Sigmoid colon (tissue), 7 donors: ENCODE measurements at regions of chr15 and their contacts with region 1.

Region 1: DNA sequence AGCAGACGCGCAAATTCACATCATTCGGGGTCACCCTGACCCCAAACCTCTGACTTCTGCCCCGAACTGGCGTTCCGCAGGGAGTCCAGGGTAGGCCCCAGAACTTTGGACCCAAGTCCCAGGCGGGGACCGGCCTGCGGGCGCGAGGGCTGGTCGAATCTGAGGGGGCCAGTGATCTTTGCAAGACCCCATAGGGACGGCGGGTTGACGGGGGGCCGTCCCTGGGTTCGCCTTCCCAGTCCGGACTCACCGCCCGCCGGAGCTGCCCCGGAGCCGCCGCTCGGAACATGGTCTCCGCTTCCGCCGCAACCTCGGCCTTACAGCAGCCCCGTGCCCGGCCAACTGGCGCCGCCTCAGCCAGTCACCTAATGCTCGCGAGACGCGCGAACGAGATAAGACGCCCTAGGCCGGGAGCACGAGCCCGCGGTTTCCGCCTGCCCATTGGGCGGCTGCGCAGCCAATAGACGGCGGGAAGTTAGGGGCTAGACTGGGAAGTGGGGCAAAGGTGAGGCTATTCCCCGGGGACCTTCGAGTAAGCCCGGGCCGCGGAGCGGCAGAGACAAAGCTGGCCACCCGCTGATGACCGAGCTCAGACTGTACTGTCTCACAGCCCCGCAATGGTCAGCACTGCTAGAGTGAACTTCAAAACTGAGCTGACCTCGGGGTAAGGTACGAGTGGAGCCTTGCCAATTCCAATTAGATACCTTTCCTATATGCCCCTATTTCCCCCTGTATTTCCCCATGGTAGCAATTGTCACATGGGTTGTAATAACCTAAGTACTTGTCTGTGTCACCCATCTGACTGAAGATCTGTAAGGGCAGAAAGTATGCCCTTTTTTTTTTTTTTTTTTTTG is at the start of gene ETFA:
- DNase-seq: peak; percentile 99
- H3K4me3 ChIP-seq: peak within 1 kb of the TSS; percentile 62 to 81 (median 68)
- H3K27ac ChIP-seq: peak within 1 kb of the TSS; percentile 84 to 88 (median 86)
- H3K4me1 ChIP-seq: peaks cover 0 to 27% (median 18%) of the 10 kb centered on the region in 4 donors
- H3K27me3 ChIP-seq: no peaks in the 10 kb centered on the region
- CTCF ChIP-seq: no peak
- EP300 ChIP-seq: peak in 1 of 4 donors; percentile 34
- POLR2A ChIP-seq: peak; percentile 90 to 91
- total RNA-seq, gene ETFA: 58.4 to 102 (median 82.0) TPM

Region 2: GRCh38 chr15:76196269-76197231 is 114.8 kb before region 1 on chr15:
- intact Hi-C with region 1: loop called (anchors 2 kb)
- DNase-seq: peak; percentile 95
- H3K4me3 ChIP-seq: no peak overlapping the region
- H3K27ac ChIP-seq: peak overlapping the region; percentile 50 to 75 (median 64)
- H3K4me1 ChIP-seq: peaks cover 0 to 44% (median 39%) of the 10 kb centered on the region in 4 donors
- H3K27me3 ChIP-seq: peaks cover 0 to 14% (median 13%) of the 10 kb centered on the region in 3 donors
- CTCF ChIP-seq: peak in 2 of 4 experiments; percentile 7 to 9
- EP300 ChIP-seq: peak in 2 of 4 donors; percentile 61 to 62
- POLR2A ChIP-seq: no peak

Region 3: DNA sequence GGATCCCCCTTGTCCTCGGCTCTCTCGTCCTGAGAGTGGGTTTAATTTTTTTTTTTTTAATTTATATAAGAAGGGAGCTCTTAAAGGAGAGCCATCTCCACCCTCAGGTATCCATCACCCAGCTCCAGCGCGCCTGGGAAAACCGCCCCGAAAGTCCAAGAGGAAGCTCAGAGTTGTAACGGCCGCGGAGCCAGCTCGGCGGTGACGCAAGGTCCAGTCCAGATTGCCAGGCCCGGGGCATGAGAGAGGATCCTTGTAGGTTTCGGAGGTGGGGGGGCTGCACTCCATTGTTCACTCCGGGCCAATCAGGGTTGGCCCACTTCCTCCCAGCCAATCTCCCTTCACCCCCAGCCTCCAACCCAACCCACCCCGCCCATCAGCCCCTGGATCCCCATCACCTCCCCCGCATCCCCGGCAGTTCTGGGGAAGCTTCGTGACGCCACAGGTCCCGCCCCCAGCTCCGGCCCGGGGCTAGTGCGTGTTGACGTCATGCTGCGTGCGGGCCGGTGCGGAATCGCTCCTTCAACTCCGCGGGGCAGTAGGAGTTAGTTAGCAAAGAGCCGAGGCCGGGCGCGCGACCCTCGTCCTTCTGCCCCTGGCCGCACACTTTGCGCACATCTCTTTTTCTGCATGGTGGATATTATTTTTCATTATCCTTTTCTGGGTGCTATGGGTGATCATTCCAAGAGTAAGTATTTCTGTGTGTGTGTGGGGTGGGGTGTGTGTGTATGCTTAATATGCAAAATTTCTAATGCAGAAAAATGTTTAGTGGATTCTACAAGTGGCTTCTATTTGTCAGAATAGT is 25.1 kb after region 1 on chr15 and contains the start of gene ISL2:
- intact Hi-C with region 1: loop called (anchors 1 kb)
- DNase-seq: peak; percentile 97
- H3K4me3 ChIP-seq: peak within 1 kb of the TSS; percentile 18 to 50 (median 42)
- H3K27ac ChIP-seq: peak within 1 kb of the TSS; percentile 50 to 75 (median 59)
- H3K4me1 ChIP-seq: peaks cover 0 to 54% (median 41%) of the 10 kb centered on the region in 4 donors
- H3K27me3 ChIP-seq: peaks cover 51 to 84% (median 76%) of the 10 kb centered on the region in 3 donors
- CTCF ChIP-seq: no peak
- EP300 ChIP-seq: no peak
- POLR2A ChIP-seq: peak in 1 of 2 donors; percentile 38
- total RNA-seq, gene ISL2: 2.2 to 6.4 (median 2.8) TPM

Region 4: DNA sequence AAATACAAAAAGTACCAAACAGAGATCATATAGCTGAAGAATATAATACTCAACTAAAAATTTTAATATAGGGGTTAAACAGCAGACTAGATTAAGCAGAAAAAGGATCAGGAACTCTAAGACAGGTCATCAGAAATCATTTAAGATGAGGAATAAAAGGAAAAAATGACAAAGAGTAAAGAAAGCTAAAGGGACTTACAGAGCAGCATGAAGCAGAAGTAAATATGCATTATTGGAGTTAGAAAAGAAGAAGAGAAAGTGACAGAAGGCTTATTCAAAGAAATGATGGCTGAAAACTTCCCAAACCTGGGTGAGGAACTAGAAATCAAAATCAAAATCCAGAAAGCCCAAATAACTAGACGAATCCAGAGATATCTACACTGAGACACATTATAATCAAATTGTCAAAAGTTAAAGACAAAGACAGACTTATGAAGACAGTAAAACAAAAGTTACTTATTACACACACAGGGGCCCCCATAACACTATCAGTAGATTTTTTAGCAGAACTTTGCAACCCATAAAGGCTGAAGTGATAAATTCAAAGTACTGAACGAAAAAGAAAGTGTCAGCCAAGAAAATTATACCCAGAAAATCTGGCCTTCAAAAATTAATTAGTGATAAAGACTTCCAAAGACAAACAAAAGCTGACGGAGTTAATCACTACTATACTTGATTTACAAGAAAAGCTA is 498.2 kb after region 1 on chr15:
- intact Hi-C with region 1: no loop called
- DNase-seq: no peak
- H3K4me3 ChIP-seq: no peak overlapping the region
- H3K27ac ChIP-seq: no peak overlapping the region
- H3K4me1 ChIP-seq: peaks cover 0 to 3% (median 0%) of the 10 kb centered on the region in 4 donors
- H3K27me3 ChIP-seq: no peaks in the 10 kb centered on the region
- CTCF ChIP-seq: no peak
- EP300 ChIP-seq: no peak
- POLR2A ChIP-seq: no peak